AG04450 (cell line): ENCODE measurements at regions of chr10 and their contacts with region 1.

Region 1: DNA sequence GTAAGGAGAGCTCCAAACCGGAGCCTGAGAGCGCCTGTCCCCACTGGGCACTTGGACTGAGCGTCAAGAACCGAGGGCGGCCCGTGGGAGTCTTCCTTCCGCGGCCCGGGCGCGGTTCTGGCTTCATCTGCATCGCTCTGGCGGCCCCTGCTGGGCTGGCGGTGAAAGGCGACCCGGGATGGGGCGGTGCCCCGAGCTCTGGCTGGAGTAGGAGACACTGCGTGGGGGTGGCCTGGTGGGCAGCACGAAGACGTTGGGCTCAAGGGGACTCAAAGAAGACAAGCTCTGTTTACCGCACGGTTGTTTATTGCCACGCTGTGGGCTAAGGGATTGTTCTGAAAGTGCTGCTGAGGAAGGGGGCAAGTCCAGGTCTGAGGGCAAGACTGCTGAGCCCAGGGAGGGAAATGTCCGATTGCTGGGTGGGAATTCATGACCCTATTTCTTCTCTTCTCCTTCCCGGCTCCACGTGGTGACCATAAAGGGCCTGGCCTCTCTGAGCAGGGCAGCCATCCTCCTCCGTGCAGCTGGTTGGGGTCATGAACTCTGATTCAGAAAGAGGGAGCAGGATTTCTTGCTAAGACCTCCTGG is 29.8 kb downstream of the PLAU start:
- DNase-seq: no peak
- H3K4me3 ChIP-seq: no peak overlapping the region
- H3K27ac ChIP-seq: peak overlapping the region; percentile 31
- H3K27me3 ChIP-seq: no peaks in the 10 kb centered on the region
- CTCF ChIP-seq: peak; percentile 94

Region 2: DNA sequence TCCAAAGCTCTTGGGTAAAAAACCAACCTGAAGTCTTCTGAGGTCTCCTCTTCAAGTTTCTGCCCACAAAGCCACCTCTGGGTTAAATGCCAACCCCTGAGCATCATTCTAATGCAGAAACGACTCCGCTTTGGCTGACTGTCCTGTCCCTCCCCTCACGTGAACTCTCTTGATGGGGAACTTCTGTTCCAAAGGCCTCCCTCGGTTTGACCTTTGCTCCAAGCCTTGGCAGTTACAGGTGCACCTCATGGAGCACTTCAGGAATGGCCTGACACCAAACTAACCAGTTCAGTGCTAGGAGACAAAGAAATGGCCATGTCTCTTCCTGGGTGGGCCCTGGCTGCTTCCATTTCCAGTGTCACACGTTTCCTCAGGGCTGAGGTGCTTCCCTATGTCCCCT is 86.4 kb before region 1 on chr10:
- CTCF ChIA-PET with region 1: interaction called, 28 read pairs
- POLR2A ChIA-PET with region 1: no interaction called
- DNase-seq: no peak
- H3K4me3 ChIP-seq: no peak overlapping the region
- H3K27ac ChIP-seq: no peak overlapping the region
- H3K27me3 ChIP-seq: no peaks in the 10 kb centered on the region
- CTCF ChIP-seq: no peak

Region 3: DNA sequence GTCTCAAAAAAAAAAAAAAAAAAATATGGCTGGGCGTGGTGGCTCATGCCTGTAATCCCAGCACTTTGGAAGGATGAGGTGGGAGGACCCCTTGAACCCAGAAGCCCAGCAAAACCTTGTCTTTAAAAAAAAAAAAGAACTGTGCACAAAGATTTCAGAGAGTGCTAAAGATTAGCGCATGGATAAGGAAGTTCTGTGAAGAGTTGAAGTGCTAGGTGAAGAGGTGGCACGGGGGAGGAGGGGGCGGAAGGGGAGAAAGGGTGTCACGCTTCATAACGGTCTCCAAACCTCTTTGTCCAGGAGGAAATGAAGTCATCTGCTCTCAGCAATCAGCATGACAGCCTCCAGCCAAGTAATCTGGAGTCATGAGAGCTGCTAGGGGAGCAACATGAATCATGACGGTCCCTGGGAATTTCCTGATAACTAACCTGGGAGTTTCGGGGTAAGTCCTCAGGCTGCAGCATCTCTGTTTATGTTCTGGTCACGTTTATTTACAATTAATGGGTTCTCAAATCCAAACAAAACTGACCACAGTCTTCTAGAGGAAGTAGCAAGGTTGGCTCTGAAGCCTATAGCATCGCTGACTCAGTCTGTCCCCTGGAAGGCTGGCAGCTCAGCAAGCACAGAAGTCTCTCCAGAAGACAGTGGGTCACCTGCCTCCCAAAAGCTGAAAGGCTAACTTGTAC is 31.7 kb before region 1 on chr10:
- CTCF ChIA-PET with region 1: interaction called, 19 read pairs
- POLR2A ChIA-PET with region 1: no interaction called
- DNase-seq: peak; percentile 99
- H3K4me3 ChIP-seq: peak overlapping the region; percentile 35; the same call in 1 of the 2 replicates
- H3K27ac ChIP-seq: peak overlapping the region; percentile 100
- H3K27me3 ChIP-seq: no peaks in the 10 kb centered on the region
- CTCF ChIP-seq: no peak

Region 4: DNA sequence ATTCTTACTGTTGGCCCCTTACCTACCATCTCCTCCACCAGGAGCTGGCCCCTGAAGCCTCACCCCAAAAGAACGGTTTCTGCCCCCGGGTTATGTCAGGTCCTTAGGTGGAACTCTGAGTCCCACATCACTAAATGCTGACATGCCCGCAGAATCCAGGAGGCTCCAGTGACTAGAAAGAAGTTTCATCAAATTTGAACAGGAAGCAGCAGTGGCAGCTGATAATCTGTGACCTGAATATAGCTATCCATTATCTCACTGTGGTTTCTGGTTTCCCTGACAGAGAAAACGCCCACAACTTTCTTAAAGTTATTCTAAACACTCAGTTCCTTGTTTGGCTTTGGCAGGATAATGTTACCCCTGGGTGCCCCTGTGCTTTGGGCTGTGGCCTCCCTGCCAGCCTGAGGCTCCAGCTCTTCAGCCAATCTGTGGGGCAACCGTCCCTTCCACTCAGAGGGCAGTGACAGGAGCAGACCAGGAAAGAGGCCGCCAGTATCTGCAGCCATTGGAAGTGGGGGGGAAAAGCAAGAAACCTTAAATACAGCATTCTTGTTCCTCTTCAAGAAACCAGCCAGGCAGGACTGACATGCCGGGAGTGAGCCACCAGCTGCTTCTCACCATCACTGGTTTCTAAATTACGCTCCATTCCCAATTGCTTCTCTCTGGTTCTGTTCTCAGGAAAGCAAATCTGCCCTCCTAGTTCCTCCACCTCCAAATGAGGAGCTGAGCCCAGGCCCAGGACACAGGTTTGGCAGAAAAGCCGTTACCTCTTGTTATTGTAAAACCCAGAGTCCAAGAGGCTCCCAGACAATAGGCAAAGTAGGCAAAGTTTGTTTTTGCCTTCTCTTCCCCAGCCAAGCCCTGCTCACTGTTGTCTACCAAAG is 16.0 kb after region 1 on chr10:
- CTCF ChIA-PET with region 1: interaction called, 18 read pairs
- POLR2A ChIA-PET with region 1: no interaction called
- DNase-seq: no peak
- H3K4me3 ChIP-seq: no peak overlapping the region
- H3K27ac ChIP-seq: peak overlapping the region; percentile 54
- H3K27me3 ChIP-seq: no peaks in the 10 kb centered on the region
- CTCF ChIP-seq: no peak

Region 5: DNA sequence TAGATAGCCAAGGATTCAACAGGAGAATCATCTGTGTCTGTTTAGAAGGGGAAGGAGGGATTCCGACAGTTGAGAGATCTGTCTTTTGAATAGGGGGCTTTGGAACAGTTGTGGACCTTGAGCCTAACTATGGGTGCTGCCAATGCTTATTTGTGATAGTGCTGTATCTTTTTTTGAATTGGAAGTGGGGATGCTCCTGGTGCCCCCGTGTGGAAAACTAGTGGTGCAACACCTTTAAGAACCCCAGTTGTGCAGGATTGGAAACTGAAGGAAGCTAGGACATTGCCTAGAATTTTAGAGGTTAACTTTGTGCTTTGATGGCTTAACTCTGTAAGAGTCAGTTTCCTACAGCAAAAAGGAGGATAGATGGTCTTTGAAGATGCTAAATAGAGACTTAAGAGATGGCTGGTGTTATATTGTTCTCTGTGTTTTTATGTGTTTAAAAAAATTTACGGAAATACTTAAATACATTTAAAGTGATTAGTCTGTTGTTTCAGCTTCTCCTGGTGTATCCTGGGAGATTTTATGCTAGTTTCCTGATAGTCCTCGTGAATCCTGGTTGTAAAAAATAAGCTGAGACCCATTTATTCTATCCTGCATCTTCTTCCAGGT is 140.6 kb after region 1 on chr10:
- CTCF ChIA-PET with region 1: interaction called, 23 read pairs
- POLR2A ChIA-PET with region 1: no interaction called
- DNase-seq: no peak
- H3K4me3 ChIP-seq: no peak overlapping the region
- H3K27ac ChIP-seq: no peak overlapping the region
- H3K27me3 ChIP-seq: no peaks in the 10 kb centered on the region
- CTCF ChIP-seq: peak; percentile 88